OCI-LY7 (cell line): ENCODE measurements at regions of chr10 and their contacts with region 1.

Region 1: GRCh38 chr10:62437696-62438095 is 63.5 kb downstream of the ZNF365 start:
- DNase-seq: peak; percentile 78
- H3K4me3 ChIP-seq: no peak overlapping the region
- H3K27ac ChIP-seq: no peak overlapping the region
- H3K4me1 ChIP-seq: no peaks in the 10 kb centered on the region
- CTCF ChIP-seq: peak; percentile 97

Region 2: GRCh38 chr10:62426086-62426485 is 11.6 kb before region 1 on chr10:
- CTCF ChIA-PET with region 1: no interaction called
- POLR2A ChIA-PET with region 1: no interaction called
- intact Hi-C with region 1: no loop called
- DNase-seq: no peak
- H3K4me3 ChIP-seq: no peak overlapping the region
- H3K27ac ChIP-seq: no peak overlapping the region
- H3K4me1 ChIP-seq: no peaks in the 10 kb centered on the region
- CTCF ChIP-seq: no peak

Region 3: GRCh38 chr10:62451611-62451975 is 13.9 kb after region 1 on chr10:
- CTCF ChIA-PET with region 1: no interaction called
- POLR2A ChIA-PET with region 1: interaction called, 16 read pairs
- intact Hi-C with region 1: no loop called
- DNase-seq: no peak
- H3K4me3 ChIP-seq: no peak overlapping the region
- H3K27ac ChIP-seq: peak overlapping the region; percentile 13
- H3K4me1 ChIP-seq: peaks cover 39% of the 10 kb centered on the region
- CTCF ChIP-seq: no peak

Region 4: GRCh38 chr10:62492012-62492869 is 54.5 kb after region 1 on chr10:
- CTCF ChIA-PET with region 1: no interaction called
- POLR2A ChIA-PET with region 1: interaction called, 4 read pairs
- intact Hi-C with region 1: loop called (anchors 1 kb)
- DNase-seq: peak; percentile 72
- H3K4me3 ChIP-seq: no peak overlapping the region
- H3K27ac ChIP-seq: no peak overlapping the region
- H3K4me1 ChIP-seq: peaks cover 3% of the 10 kb centered on the region
- CTCF ChIP-seq: peak; percentile 93

Region 5: DNA sequence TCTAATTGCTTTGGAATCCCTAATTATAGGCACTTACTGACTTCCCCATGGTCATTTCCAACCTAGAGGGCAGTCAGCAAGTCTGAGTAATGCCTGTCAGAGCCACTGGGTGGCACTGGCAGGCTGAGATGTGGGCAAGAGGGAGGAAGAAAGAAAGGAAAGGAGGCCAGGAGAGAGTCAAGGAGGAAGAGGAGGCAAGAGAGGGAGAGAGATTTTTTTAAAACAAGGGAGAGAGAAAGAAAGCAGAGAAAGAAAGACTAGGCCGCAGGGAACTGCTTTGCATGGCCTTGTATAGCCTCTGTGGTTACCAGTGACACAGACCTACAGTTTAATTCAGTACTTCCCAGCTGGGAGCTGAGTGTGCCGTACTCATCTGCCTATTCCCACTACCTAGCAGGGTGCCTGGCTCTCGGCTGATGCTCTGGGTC is 156.4 kb after region 1 on chr10:
- CTCF ChIA-PET with region 1: no interaction called
- POLR2A ChIA-PET with region 1: interaction called, 3 read pairs
- intact Hi-C with region 1: loop called (anchors 1 kb)
- DNase-seq: peak; percentile 75
- H3K4me3 ChIP-seq: no peak overlapping the region
- H3K27ac ChIP-seq: no peak overlapping the region
- H3K4me1 ChIP-seq: peaks cover 6% of the 10 kb centered on the region
- CTCF ChIP-seq: peak; percentile 99

Region 6: GRCh38 chr10:63083904-63084689 is 646.4 kb after region 1 on chr10:
- CTCF ChIA-PET with region 1: no interaction called
- POLR2A ChIA-PET with region 1: no interaction called
- intact Hi-C with region 1: loop called (anchors 1 kb)
- DNase-seq: peak; percentile 74
- H3K4me3 ChIP-seq: no peak overlapping the region
- H3K27ac ChIP-seq: no peak overlapping the region
- H3K4me1 ChIP-seq: no peaks in the 10 kb centered on the region
- CTCF ChIP-seq: peak; percentile 85

Region 7: DNA sequence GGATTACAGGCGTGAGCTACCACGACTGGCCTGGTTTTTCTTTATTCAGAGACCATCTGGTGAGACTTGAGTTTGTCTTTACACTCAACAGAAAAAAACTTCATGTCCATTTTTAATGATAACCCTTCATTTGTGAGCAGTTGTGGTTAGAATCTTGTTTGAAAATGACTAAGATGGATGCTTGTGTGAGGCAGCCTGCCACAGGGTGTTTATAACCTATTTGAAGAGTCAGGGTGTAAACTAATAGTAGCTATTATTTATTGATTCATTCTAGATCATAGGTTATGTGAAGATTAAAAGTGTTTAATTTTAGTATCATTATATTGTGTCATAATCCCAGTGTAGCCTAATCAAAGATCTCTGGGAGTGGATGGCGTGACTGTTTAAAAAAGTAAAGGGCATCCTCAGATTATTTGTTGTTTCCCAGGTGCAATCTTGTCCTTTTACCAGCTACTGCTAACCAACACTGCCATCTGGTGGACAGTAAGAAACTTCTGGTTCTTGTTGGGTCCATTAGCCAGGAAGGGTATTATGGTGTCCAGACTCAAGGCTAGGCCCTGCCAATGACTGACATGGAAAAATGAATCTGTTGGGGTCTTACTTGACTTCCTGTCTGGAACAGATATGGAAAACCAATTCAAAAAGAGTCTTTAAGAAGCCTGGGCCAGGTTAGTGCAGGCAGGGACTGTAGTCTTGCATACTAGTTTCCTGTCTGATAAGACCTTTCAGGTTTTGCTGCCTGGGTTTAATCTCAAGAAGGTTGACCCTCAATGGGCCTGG is 720.3 kb after region 1 on chr10:
- CTCF ChIA-PET with region 1: no interaction called
- POLR2A ChIA-PET with region 1: no interaction called
- intact Hi-C with region 1: loop called (anchors 10 kb)
- DNase-seq: peak; percentile 87
- H3K4me3 ChIP-seq: no peak overlapping the region
- H3K27ac ChIP-seq: no peak overlapping the region
- H3K4me1 ChIP-seq: no peaks in the 10 kb centered on the region
- CTCF ChIP-seq: peak; percentile 96